ENCODE measurements at regions of chr9 and their contacts with region 1.

Region 1: DNA sequence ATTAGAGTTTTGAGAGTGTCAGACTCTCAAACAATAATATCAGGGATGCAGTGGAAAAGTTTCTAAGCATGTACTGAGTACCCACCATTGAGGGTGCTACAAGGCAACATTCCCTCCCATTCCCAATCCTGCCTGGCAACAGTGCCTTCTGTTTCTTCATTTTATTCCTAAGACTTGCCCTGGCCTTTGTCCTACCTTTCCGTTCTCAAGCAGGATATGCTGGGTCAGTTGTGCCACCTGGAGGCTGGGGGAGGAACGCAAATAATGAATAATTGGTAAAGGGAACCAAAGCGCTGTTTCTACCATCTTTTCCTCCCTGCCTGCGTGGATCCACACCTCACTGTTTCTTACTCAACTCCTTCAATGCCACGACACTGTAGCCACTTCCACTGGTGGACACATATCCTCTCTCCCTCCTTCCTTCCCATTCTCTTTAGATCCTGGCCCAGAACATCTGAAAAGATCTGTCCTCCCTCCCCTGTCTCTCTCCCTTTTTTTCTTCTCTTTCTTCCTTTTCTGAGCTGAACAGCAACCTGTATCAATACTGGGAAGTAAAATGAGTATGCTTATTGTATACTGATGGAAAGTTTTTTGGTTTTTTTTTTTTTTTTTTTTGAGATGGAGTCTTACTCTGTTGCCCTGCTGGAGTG is 149.5 kb downstream of the C9orf152 start:
- DNase-seq: peak in 2 of 3 donors; percentile 70 to 82
- ATAC-seq: peak; percentile 91
- H3K4me3 ChIP-seq: no peak overlapping the region
- H3K4me1 ChIP-seq: no peaks in the 10 kb centered on the region
- CTCF ChIP-seq: peak; percentile 23

Region 2: GRCh38 chr9:109903515-109904138 is 154.8 kb before region 1 on chr9:
- intact Hi-C with region 1: loop called in 1 of 2 experiments (anchors 5 kb)
- DNase-seq: peak in 1 of 3 donors; percentile 88
- ATAC-seq: peak; percentile 70
- H3K4me3 ChIP-seq: no peak overlapping the region
- H3K4me1 ChIP-seq: peaks cover 15% of the 10 kb centered on the region
- CTCF ChIP-seq: peak; percentile 47

Region 3: DNA sequence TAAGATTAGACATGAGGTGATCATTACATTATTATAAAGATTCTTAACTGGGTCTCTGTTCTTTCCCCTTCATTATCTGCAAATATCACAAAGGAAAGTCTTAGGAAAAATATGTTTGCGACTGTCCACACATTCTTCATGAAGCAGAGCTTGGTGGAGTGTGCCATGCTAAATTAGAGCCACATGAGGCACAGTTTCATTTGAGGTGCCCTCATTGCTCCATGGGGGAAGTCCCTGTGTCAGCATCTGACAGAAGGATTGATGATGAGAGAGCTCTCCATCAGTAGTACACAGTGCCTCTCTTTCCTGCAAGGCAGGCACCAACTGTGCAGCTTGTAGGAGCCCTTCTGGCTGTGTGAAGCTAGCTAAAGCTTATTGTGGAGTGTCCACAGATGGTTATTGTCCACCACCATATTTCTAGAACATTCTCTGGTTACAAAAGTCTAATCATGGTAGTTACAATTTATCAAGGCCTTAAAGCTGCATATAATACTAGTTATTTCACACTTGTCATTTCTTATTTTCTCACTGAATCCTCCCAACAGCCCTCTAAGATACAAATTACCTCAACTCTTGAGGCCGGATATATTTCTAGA is 85.6 kb after region 1 on chr9:
- intact Hi-C with region 1: no loop called
- DNase-seq: no peak
- ATAC-seq: peak; percentile 62
- H3K4me3 ChIP-seq: no peak overlapping the region
- H3K4me1 ChIP-seq: peaks cover 9% of the 10 kb centered on the region
- CTCF ChIP-seq: no peak

Region 4: GRCh38 chr9:111253742-111254437 is 1195.5 kb after region 1 on chr9:
- intact Hi-C with region 1: no loop called
- DNase-seq: no peak
- ATAC-seq: no peak
- H3K4me3 ChIP-seq: no peak overlapping the region
- H3K4me1 ChIP-seq: no peaks in the 10 kb centered on the region
- CTCF ChIP-seq: no peak

Measured in mucosa of descending colon (tissue), 3 donors.